AG04450 (cell line): ENCODE measurements at regions of chr3 and their contacts with region 1.

Region 1: DNA sequence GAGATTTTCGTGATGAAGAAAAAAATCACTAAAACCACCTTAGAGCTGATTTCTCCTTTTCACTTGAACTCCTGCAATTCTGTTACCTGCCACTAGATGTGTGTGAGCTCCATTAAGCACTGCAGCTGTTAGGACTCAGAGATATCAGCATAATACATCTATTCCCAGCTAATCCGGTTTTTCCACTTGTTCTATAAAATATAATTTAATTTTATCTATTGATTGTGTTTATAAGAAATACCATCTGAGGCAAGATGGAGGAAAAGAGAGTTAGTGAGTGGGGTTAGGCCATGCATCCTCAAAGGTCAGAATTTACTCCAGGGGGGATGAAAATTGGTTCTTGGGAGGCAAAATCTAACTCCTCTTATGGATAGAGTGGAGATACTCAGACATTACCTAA is 152.7 kb downstream of the IL20RB start:
- DNase-seq: no peak
- H3K4me3 ChIP-seq: no peak overlapping the region
- H3K27ac ChIP-seq: no peak overlapping the region
- H3K27me3 ChIP-seq: peaks cover 8% of the 10 kb centered on the region
- CTCF ChIP-seq: peak; percentile 88

Region 2: DNA sequence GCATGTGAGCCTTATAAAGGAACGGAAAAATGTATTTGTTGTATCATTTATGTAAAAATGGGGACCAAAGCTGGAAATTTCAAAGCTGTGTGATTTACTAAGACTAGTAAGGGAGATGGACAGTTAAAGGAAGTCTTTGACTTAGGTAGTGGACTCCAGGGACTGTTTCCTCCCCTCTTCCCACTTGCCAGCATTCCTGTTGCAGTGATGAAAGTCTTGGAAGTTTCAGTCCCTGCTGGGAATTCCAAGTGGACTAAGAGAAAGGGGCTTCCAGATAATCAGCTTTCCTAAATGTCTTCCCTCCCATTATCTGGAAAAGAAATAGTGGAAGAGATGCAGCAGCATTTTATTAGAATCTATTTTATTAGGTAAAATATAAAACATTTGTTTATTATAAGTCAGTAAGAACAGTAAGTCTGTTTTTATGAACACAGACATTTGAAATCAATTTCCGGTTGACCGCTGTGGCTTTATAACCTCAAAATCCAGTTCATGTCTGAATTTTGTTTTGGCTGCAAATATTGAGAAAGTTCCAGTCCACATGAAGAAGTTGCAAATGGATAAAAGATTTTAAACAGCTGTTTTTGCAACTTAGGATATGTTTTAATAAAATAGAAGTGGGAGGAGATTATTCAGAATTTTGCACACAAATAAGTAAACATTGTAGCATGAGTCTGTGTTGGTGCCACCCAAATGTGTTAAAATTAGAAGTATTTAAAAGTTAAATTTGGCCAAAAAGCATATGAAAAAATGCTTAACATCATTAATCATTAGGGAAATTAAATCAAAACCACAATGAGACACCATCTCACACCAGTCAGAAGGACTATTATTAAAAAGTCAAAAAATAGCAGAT is 10.9 kb before region 1 on chr3:
- CTCF ChIA-PET with region 1: interaction called, 18 read pairs
- POLR2A ChIA-PET with region 1: no interaction called
- DNase-seq: no peak
- H3K4me3 ChIP-seq: no peak overlapping the region
- H3K27ac ChIP-seq: no peak overlapping the region
- H3K27me3 ChIP-seq: no peaks in the 10 kb centered on the region
- CTCF ChIP-seq: no peak

Region 3: DNA sequence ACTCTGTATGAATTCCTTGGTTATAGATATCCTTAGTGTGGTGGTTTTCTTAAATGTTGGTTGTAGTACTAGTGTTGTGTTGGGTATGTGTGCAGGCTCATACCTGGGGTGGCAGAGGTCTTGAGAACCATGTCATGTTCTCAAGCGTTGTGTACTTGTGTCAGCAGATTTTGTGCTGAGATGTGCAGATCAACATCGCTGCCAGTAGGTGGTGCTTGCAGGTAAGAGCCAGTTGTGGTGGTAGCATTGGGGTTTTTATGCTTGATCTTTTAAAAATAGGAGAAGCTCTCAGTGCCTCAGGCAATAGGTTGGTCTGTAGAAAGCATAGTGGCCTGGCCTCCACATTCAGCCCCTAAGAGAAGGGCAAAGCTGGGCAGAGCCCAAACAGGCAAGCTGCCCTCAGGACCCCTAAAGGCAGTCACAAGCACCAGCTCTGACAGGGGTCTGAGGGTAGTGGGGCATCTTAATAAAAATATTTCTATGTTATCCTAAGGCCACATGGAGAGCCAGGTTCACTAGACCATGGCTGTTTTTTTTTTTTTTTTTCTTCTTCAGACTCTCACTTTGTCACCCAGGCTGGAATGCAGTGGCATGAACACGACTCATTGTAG is 11.3 kb after region 1 on chr3:
- CTCF ChIA-PET with region 1: interaction called, 17 read pairs
- POLR2A ChIA-PET with region 1: no interaction called
- DNase-seq: peak; percentile 4
- H3K4me3 ChIP-seq: no peak overlapping the region
- H3K27ac ChIP-seq: no peak overlapping the region
- H3K27me3 ChIP-seq: peaks cover 2% of the 10 kb centered on the region
- CTCF ChIP-seq: peak; percentile 67